ENCODE measurements at regions of chr4 and their contacts with region 1.

Region 1: DNA sequence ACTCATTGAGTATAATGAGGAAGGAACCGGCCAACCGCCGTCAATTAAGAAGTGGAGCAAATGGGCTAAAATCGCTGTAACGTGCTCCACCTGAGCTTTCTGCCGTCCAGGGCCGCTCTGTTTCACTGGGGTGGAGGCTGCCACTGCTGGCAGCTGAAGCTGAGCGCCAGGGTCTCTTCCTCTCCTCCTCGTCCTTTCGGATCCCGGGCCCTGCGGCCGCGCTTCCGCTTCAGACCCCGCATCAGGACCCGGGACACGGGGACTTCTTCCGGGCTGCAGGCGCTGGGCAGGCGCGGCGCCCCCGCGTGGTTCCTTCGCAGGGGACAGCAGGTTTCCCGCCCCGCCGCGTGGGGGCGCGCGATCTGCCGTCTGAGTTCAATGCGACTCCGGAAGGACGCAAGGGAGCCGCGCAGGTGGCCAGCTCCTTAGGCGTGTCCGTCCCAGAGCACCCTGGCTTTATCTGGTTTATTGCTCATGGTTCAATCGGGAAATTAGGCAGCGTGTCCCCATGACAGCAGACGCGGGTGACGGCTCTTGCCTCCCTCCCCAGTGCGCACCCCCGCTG is 519.8 kb downstream of the TRIML1 start:
- DNase-seq: no peak
- H3K4me3 ChIP-seq: no peak overlapping the region
- H3K27ac ChIP-seq: no peak overlapping the region
- H3K4me1 ChIP-seq: no peaks in the 10 kb centered on the region
- H3K27me3 ChIP-seq: peaks cover 6% of the 10 kb centered on the region
- CTCF ChIP-seq: no peak

Region 2: GRCh38 chr4:188903995-188904394 is 245.0 kb after region 1 on chr4:
- CTCF ChIA-PET with region 1: no interaction called
- POLR2A ChIA-PET with region 1: no interaction called
- intact Hi-C with region 1: loop called (anchors 5 kb)
- DNase-seq: no peak
- H3K4me3 ChIP-seq: no peak overlapping the region
- H3K27ac ChIP-seq: no peak overlapping the region
- H3K4me1 ChIP-seq: no peaks in the 10 kb centered on the region
- H3K27me3 ChIP-seq: peaks cover 60% of the 10 kb centered on the region
- CTCF ChIP-seq: peak; percentile 23

Measured in A673 (cell line).